HCT116 (cell line): ENCODE measurements at regions of chr4 and their contacts with region 1.

Region 1: GRCh38 chr4:52376132-52376704 is 282.9 kb downstream of the USP46 start:
- DNase-seq: peak; percentile 33
- ATAC-seq: 0 out of 2 replicates have a peak, but pooled peaks have one; percentile 27
- H3K4me3 ChIP-seq: no peak overlapping the region
- H3K27ac ChIP-seq: no peak overlapping the region
- H3K4me1 ChIP-seq: no peaks in the 10 kb centered on the region
- H3K27me3 ChIP-seq: peaks cover 10% of the 10 kb centered on the region
- CTCF ChIP-seq: peak; percentile 33 to 74 (median 70); a peak in 4 of 6 replicates
- POLR2A ChIP-seq: no peak
- RAD21 ChIP-seq: peak; percentile 76

Region 2: GRCh38 chr4:52545099-52546069 is 169.2 kb after region 1 on chr4:
- CTCF ChIA-PET with region 1: interaction called, 10 read pairs
- POLR2A ChIA-PET with region 1: no interaction called
- RAD21 ChIA-PET with region 1: no interaction called
- intact Hi-C with region 1: no loop called
- DNase-seq: peak; percentile 52
- ATAC-seq: peak; percentile 97
- H3K4me3 ChIP-seq: no peak overlapping the region; a peak in 1 of 4 replicates
- H3K27ac ChIP-seq: no peak overlapping the region
- H3K4me1 ChIP-seq: peaks cover 0 to 3% of the 10 kb centered on the region in 2 experiments; a peak in 1 of 4 replicates
- H3K27me3 ChIP-seq: no peaks in the 10 kb centered on the region
- CTCF ChIP-seq: peak; percentile 84 to 98 (median 95)
- POLR2A ChIP-seq: no peak
- RAD21 ChIP-seq: peak; percentile 94